Activated CD4-positive, alpha-beta memory T cell treated with anti-CD3 and anti-CD28 coated beads, Interleukin-2, amount 10 ng/mL, durations not matched to agents 7 days and 5 days (primary cell): ENCODE measurements at regions of chr17 and their contacts with region 1.

Region 1: GRCh38 chr17:47708863-47709541 is 15.0 kb downstream of the TBKBP1 start:
- DNase-seq: no peak
- H3K4me3 Mint-ChIP-seq: no peak overlapping the region
- H3K27ac Mint-ChIP-seq: no peak overlapping the region
- H3K4me1 Mint-ChIP-seq: peaks cover 60% of the 10 kb centered on the region
- H3K27me3 Mint-ChIP-seq: peaks cover 11% of the 10 kb centered on the region

Region 2: DNA sequence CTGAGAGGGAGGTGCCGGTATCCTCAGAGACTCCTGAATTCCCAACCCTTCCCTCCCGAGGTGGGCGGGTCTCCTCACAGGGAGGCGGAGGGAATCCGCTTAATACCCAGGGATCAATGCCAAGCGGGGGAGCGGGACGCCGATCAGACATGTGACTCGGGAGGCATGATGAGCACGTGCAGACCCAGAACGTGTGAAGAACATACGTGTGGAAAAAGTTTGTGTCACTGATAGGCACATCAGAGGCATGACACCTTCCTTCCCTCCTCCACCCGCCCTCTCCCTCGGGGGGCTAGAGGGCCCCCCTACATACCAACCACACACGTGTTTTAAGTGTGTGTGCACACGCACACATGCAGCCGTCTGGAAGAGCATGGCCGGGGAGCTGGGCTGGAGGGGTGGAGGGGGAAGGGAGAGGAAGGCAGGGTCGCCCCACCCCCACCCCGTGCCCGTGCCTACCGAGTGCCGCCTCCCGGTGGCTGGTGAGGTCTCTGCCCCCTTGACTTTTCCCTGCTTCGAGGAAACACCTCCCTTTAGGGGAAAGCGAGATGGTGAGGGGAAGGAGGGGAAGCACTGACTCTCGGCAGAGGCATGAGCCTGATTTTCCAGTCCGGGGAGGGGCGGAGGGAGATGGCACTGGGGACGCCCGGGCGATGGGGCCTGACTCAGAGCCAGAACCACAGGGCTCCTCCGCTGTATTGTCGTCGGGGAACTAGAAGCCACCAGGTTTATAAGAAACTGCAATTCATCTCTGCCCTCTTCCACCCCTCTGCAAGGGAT is 11.9 kb after region 1 on chr17:
- CTCF ChIA-PET with region 1: interaction called, 17 read pairs
- POLR2A ChIA-PET with region 1: interaction called, 463 read pairs
- DNase-seq: peak; percentile 93
- H3K4me3 Mint-ChIP-seq: peak overlapping the region; percentile 58
- H3K27ac Mint-ChIP-seq: peak overlapping the region; percentile 78
- H3K4me1 Mint-ChIP-seq: peaks cover 86% of the 10 kb centered on the region
- H3K27me3 Mint-ChIP-seq: peaks cover 2% of the 10 kb centered on the region